ENCODE measurements at regions of chr18 and their contacts with region 1.

Region 1: GRCh38 chr18:4605212-4605611 is 150.1 kb upstream of the DLGAP1 start:
- DNase-seq: no peak
- ATAC-seq: no peak
- H3K4me3 Mint-ChIP-seq: no peak overlapping the region
- H3K27ac Mint-ChIP-seq: no peak overlapping the region
- H3K4me1 Mint-ChIP-seq: peaks cover 6% of the 10 kb centered on the region
- H3K27me3 Mint-ChIP-seq: no peaks in the 10 kb centered on the region; the same call in 1 of the 2 replicates
- CTCF ChIP-seq: no peak

Region 2: DNA sequence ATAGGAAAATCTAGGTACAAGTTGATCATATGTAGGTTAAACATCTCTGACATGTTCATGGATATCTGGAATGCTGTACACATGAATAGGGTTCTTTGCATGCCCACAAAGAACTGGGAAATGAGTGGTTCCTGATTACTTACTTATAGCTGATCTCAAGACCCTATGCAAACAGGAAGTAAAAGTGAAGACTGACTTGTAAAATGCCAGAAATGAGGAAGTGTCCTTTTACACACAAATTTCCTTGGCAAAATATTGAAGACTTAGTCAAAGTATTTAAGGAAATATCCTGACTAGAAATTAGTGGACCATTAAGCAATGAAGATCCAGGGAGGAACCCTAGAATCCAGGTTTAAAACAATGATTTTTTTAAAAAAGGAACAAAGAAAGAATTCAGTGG is 53.6 kb after region 1 on chr18:
- CTCF ChIA-PET with region 1: no interaction called
- POLR2A ChIA-PET with region 1: interaction called, 10 read pairs
- DNase-seq: no peak
- ATAC-seq: no peak
- H3K4me3 Mint-ChIP-seq: no peak overlapping the region
- H3K27ac Mint-ChIP-seq: no peak overlapping the region
- H3K4me1 Mint-ChIP-seq: peaks cover 4% of the 10 kb centered on the region
- H3K27me3 Mint-ChIP-seq: no peaks in the 10 kb centered on the region
- CTCF ChIP-seq: no peak

Measured in WTC11 (cell line).